IMR-90 (cell line): ENCODE measurements at regions of chr9 and their contacts with region 1.

Region 1: DNA sequence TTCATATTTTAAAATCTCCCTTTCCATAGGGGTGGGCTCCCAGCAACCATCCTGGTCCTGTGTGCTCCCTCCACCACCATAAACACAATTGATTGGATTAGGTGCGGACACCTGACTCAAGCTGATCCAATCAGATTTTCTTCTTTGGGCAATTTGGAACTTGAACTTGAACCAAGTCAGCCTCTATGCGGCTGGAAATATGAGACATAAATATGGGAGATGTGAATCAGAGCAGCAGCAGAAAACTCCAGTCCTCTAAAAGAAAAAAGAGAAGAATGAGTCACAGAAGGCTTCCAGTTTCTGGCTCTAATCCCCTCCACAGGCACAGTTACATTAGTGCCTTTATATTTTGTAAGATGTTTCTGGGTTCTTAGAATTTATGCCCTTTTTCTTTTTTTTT is 306.6 kb downstream of the MLLT3 start:
- DNase-seq: peak; percentile 91
- ATAC-seq: peak; percentile 86
- H3K4me3 ChIP-seq: no peak overlapping the region
- H3K27ac ChIP-seq: no peak overlapping the region
- H3K4me1 ChIP-seq: peaks cover 9% of the 10 kb centered on the region
- H3K27me3 ChIP-seq: no peaks in the 10 kb centered on the region
- CTCF ChIP-seq: no peak
- POLR2A ChIP-seq: no peak
- RAD21 ChIP-seq: 0 out of 2 replicates have a peak, but pooled peaks have one; percentile 2

Region 2: DNA sequence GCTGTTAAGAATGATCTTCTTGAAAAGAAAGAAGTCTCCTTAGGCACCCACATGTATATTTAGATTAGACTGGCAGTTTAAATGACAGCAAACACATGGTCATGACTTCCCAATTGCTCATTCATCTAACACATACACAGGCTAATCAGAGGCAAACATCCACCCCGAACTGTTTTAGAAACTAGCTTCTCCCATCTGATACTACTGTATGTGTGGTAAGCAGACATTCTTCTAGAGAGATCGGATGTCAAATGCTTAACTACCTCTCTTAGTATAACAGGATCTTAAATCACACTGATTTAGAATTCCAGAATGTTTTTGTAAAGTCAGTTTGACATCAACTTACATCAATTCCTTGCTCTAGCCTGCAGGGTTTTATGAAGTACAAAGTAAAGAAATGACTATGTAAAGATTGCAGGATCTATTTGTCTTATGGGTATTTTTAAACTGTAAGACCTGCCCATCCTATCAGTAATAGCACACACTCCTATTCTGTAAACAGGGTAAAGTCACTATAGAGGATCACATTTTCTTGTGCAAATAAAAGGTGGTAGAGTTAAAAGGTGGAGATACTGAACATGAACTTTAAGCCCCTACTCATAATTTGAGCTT is 66.9 kb after region 1 on chr9:
- CTCF ChIA-PET with region 1: no interaction called
- POLR2A ChIA-PET with region 1: no interaction called
- dilution Hi-C with region 1: no loop called
- in situ Hi-C with region 1: no loop called
- intact Hi-C with region 1: no loop called
- DNase-seq: peak; percentile 78
- ATAC-seq: peak; percentile 98
- H3K4me3 ChIP-seq: no peak overlapping the region
- H3K27ac ChIP-seq: no peak overlapping the region
- H3K4me1 ChIP-seq: peaks cover 7% of the 10 kb centered on the region
- H3K27me3 ChIP-seq: no peaks in the 10 kb centered on the region
- CTCF ChIP-seq: no peak
- POLR2A ChIP-seq: no peak
- RAD21 ChIP-seq: no peak

Region 3: DNA sequence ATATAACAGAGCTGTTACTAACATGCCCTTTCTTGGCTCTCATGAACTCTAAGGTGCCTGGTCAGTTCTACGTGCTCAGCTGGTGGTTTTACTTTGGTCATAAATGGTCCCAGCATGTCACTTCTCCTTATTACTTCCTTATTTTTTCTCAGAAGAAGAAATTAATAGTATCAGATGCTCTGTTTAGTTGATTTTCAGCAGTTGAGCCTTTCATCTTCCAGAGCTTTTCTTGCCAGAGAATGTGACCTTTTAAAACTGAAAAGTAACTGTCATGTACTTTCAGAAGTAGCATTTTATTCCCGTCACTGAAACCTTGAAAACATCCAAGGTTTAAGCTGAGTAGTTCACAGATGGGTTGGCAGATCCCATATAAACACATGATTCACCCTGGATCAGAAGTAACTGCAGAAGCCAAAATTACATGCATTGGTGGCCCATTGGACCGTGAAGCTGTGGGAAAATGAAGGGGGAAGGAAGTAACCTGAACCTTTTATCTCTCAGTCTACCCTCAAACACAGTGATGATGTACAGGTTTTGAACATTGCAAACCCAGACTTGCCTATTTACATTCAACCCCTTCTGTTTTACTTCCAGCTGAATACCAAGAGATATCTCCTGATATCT is 665.3 kb after region 1 on chr9:
- CTCF ChIA-PET with region 1: no interaction called
- POLR2A ChIA-PET with region 1: interaction called, 12 read pairs
- dilution Hi-C with region 1: no loop called
- in situ Hi-C with region 1: no loop called
- intact Hi-C with region 1: no loop called
- DNase-seq: peak; percentile 93
- ATAC-seq: peak; percentile 77
- H3K4me3 ChIP-seq: no peak overlapping the region
- H3K27ac ChIP-seq: peak overlapping the region; percentile 79; the same call in 1 of the 2 replicates
- H3K4me1 ChIP-seq: peaks cover 15% of the 10 kb centered on the region
- H3K27me3 ChIP-seq: no peaks in the 10 kb centered on the region
- CTCF ChIP-seq: no peak
- POLR2A ChIP-seq: no peak
- RAD21 ChIP-seq: no peak